Natural killer cell (primary cell): ENCODE measurements at regions of chr15 and their contacts with region 1.

Region 1: GRCh38 chr15:94230956-94231722 is at the start of gene MCTP2:
- DNase-seq: peak; percentile 90 to 93
- ATAC-seq: peak; percentile 82 to 97 (median 90)
- H3K4me3 ChIP-seq: peak within 1 kb of the TSS; percentile 78
- H3K4me3 Mint-ChIP-seq: peak within 1 kb of the TSS; percentile 90
- H3K27ac ChIP-seq: peak within 1 kb of the TSS; percentile 99
- H3K27ac Mint-ChIP-seq: peak within 1 kb of the TSS; percentile 90 to 96
- H3K4me1 ChIP-seq: peaks cover 45% of the 10 kb centered on the region
- H3K4me1 Mint-ChIP-seq: peaks cover 78 to 80% of the 10 kb centered on the region in 2 donors
- H3K27me3 ChIP-seq: no peaks in the 10 kb centered on the region
- H3K27me3 Mint-ChIP-seq: no peaks in the 10 kb centered on the region
- CTCF ChIP-seq: peak; percentile 15
- total RNA-seq, gene MCTP2: 235 to 312 (median 261) TPM

Region 2: GRCh38 chr15:92903941-92904831 is 1327.0 kb before region 1 on chr15:
- intact Hi-C with region 1: loop called (anchors 2 kb)
- DNase-seq: peak; percentile 99
- ATAC-seq: peak; percentile 73 to 95 (median 86)
- H3K4me3 ChIP-seq: peak overlapping the region; percentile 65
- H3K4me3 Mint-ChIP-seq: peak overlapping the region; percentile 93
- H3K27ac ChIP-seq: peak overlapping the region; percentile 99
- H3K27ac Mint-ChIP-seq: peak overlapping the region; percentile 99 to 100
- H3K4me1 ChIP-seq: peaks cover 27% of the 10 kb centered on the region
- H3K4me1 Mint-ChIP-seq: peaks cover 76% of the 10 kb centered on the region in 2 donors
- H3K27me3 ChIP-seq: no peaks in the 10 kb centered on the region
- H3K27me3 Mint-ChIP-seq: no peaks in the 10 kb centered on the region
- CTCF ChIP-seq: no peak

Region 3: DNA sequence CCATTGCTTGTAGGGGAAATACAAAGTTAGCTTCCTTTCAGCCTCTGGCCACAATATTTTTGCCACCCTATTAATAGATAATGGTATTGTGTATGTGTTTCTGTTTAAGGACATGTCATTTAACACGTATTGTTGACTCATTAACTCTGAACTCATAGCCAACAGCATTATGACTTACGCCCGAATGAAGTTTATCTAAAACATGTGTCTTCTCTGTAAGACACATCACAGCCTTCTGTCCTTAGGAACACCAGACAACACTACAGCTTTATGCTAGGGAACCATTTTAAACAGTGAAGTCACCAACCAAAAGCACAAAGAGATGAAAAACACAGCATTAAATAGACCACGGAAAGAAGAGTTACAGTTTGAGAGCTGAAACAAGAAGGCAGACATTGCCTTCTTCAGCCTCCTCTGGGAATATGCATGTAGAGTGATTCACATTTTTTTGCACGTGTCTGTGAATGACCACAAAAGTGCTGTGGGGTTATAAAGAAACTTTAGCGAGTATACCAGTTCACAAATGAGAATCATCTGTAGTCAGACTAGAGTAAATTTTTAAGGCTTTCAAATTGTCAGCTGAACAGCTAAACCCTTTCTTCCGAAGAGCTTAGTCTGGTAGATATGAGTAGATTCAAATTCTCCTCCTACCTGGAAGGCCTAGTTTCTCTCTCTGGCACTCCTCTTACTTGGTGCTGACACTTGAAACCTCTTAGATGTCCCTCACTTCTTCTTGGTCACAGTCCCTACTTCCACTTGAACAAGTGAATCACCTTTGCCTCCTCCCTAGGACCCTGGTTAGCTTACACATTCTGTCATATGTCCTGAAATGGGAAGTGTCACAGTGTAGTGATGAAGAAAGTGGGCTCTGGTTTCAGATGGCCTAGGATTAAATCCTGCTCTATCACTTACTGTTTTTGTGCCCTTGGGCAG is 32.5 kb after region 1 on chr15:
- intact Hi-C with region 1: loop called (anchors 2 kb)
- DNase-seq: no peak
- ATAC-seq: peak; percentile 71 to 76 (median 74)
- H3K4me3 ChIP-seq: no peak overlapping the region
- H3K4me3 Mint-ChIP-seq: peak overlapping the region; percentile 80
- H3K27ac ChIP-seq: peak overlapping the region; percentile 67
- H3K27ac Mint-ChIP-seq: peak overlapping the region in 1 of 2 donors; percentile 96
- H3K4me1 ChIP-seq: peaks cover 56% of the 10 kb centered on the region
- H3K4me1 Mint-ChIP-seq: peaks cover 80 to 82% of the 10 kb centered on the region in 2 donors
- H3K27me3 ChIP-seq: no peaks in the 10 kb centered on the region
- H3K27me3 Mint-ChIP-seq: no peaks in the 10 kb centered on the region
- CTCF ChIP-seq: no peak

Region 4: DNA sequence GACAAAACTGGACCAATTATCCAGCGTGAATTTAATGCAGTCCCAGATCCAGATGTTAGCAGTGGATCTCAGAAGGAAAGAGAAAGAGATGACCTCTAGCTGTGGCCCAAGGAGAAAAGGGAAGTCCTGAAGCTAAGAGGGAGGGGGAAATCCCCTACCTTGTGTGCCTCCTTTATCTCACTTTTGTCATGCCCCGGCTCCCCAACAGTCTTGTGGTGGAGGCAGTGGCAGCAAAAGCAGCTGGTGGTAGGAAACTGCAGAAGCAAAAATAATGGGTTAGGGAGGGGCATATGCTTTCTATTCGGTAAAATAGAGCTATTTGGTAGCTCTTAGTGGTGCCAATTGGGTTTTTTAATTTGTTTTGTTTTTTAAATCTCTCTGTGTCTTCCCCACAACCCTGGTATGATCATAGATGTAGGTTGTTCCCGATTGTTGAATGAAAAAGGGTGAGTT is 56.7 kb after region 1 on chr15:
- intact Hi-C with region 1: loop called (anchors 5 kb)
- DNase-seq: peak; percentile 68 to 78
- ATAC-seq: peak; percentile 91 to 99 (median 96)
- H3K4me3 ChIP-seq: peak overlapping the region; percentile 22
- H3K4me3 Mint-ChIP-seq: peak overlapping the region; percentile 88
- H3K27ac ChIP-seq: peak overlapping the region; percentile 93
- H3K27ac Mint-ChIP-seq: peak overlapping the region in 1 of 2 donors; percentile 93
- H3K4me1 ChIP-seq: peaks cover 33% of the 10 kb centered on the region
- H3K4me1 Mint-ChIP-seq: peaks cover 88 to 92% of the 10 kb centered on the region in 2 donors
- H3K27me3 ChIP-seq: no peaks in the 10 kb centered on the region
- H3K27me3 Mint-ChIP-seq: no peaks in the 10 kb centered on the region
- CTCF ChIP-seq: no peak

Region 5: DNA sequence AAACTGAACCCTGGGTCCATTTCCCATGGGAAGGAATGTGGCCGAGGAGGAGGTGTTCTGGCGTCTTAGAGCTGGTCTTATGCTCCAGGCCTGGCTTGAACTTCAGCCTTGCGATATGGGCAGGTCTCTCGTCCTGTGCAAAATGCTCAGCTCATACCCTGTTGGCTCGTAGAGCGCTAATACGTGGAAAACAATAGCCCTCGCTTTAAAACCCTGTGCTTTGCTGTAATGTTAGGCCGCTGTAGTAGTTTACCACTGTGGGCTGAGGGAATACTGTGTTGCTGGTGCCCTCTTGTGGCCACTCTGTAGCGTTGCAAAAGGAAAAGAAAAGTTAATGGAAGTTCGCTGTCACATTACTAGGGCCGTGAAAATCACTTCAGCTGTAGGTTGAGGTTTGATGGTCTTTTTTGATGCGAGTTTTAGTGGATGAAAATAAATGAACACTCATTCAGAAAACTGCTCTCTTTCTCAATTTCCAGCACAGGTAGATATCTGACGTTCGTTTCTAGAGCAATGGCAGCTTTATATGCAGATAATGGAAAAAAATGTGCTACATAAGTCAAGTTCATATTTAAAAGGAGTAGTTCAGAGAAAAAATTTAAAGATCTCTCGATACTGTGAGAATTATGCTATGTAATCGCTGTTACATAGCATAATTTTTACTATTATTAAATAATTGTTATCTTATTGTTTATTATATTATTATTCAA is 93.1 kb after region 1 on chr15:
- intact Hi-C with region 1: loop called (anchors 1 kb)
- DNase-seq: peak; percentile 65 to 85
- ATAC-seq: peak; percentile 71 to 97 (median 73)
- H3K4me3 ChIP-seq: no peak overlapping the region
- H3K4me3 Mint-ChIP-seq: peak overlapping the region; percentile 72
- H3K27ac ChIP-seq: peak overlapping the region; percentile 57
- H3K27ac Mint-ChIP-seq: peak overlapping the region; percentile 91 to 93
- H3K4me1 ChIP-seq: peaks cover 18% of the 10 kb centered on the region
- H3K4me1 Mint-ChIP-seq: peaks cover 54 to 68% of the 10 kb centered on the region in 2 donors
- H3K27me3 ChIP-seq: no peaks in the 10 kb centered on the region
- H3K27me3 Mint-ChIP-seq: no peaks in the 10 kb centered on the region
- CTCF ChIP-seq: peak; percentile 87